Aorta (tissue), 5 donors: ENCODE measurements at regions of chr15 and their contacts with region 1.

Region 1: GRCh38 chr15:25850154-25851111 is 12.7 kb downstream of the ATP10A start:
- DNase-seq: peak; percentile 94 to 95
- ATAC-seq: peak; percentile 92
- H3K4me3 ChIP-seq: peak overlapping the region in 1 of 2 donors; percentile 35
- H3K27ac ChIP-seq: peak overlapping the region; percentile 98 to 99
- H3K4me1 ChIP-seq: peaks cover 0 to 14% of the 10 kb centered on the region in 2 donors
- H3K27me3 ChIP-seq: no peaks in the 10 kb centered on the region

Region 2: GRCh38 chr15:25710184-25710583 is 140.2 kb before region 1 on chr15:
- intact Hi-C with region 1: loop called in 1 of 2 experiments (anchors 10 kb)
- DNase-seq: peak in 1 of 2 donors; percentile 85
- ATAC-seq: no peak
- H3K4me3 ChIP-seq: no peak overlapping the region
- H3K27ac ChIP-seq: no peak overlapping the region
- H3K4me1 ChIP-seq: no peaks in the 10 kb centered on the region
- H3K27me3 ChIP-seq: no peaks in the 10 kb centered on the region

Region 3: DNA sequence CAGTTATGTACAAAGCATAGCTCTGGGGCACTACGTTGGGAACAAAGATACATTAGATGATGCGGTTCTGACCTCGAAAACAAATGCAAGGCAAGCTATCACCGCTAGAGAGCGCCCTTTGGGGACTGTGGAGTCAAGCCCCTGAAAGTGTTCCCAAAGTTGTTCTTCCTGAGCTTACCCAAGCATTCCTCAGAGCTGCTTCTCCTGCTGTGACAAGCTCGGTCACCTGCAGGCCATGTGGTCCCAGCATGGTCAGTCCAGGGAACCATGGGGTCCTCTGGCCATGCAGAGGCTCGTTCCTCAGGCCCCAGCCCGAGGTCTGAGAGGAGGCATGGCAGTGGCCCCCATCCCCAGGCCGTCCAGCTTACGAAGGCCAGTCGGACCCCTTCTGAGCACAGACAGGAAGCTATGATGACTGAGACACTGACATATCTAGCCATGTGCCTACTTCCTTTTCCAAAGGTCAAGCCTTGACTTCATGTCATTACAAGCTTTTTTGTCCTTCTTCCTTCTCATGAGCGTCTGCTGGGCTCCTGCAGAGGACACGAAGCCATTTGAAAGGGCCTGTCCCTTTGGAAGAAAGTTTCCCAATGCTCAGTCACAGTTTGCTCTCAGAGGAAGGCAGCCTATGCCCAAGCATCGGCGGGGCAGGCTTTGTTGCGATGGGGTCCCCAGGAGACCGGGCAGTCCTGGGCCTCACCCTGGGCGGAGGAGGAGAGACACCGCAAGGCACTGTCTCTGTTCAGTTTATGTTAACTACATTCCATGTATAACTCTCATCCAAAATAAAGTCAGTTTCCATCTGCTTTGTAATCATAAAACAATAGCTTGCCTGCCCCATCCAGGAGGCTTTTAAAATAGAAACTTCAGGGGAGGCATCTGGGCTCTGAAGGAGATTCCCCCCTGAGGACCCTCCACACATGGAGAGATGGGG is 66.6 kb before region 1 on chr15:
- intact Hi-C with region 1: loop called in 1 of 2 experiments (anchors 10 kb)
- DNase-seq: peak in 1 of 2 donors; percentile 73
- ATAC-seq: no peak
- H3K4me3 ChIP-seq: no peak overlapping the region
- H3K27ac ChIP-seq: no peak overlapping the region
- H3K4me1 ChIP-seq: peaks cover 2 to 3% of the 10 kb centered on the region in 2 donors
- H3K27me3 ChIP-seq: no peaks in the 10 kb centered on the region